B cell (primary cell): ENCODE measurements at regions of chr1 and their contacts with region 1.

Region 1: GRCh38 chr1:231603598-231604275 is 22.9 kb upstream of the DISC1 start:
- DNase-seq: peak; percentile 70
- ATAC-seq: peak; percentile 83
- H3K4me3 ChIP-seq: peak overlapping the region; percentile 37 to 94 (median 68)
- H3K4me3 Mint-ChIP-seq: peak overlapping the region; percentile 93
- H3K27ac ChIP-seq: peak overlapping the region in 1 of 2 donors; percentile 48
- H3K27ac Mint-ChIP-seq: peak overlapping the region; percentile 67
- H3K4me1 ChIP-seq: peaks cover 6 to 10% of the 10 kb centered on the region in 2 donors
- H3K4me1 Mint-ChIP-seq: peaks cover 14% of the 10 kb centered on the region
- H3K27me3 ChIP-seq: peaks cover 0 to 3% (median 0%) of the 10 kb centered on the region in 4 experiments
- H3K27me3 Mint-ChIP-seq: peaks cover 8% of the 10 kb centered on the region
- CTCF ChIP-seq: peak; percentile 85

Region 2: DNA sequence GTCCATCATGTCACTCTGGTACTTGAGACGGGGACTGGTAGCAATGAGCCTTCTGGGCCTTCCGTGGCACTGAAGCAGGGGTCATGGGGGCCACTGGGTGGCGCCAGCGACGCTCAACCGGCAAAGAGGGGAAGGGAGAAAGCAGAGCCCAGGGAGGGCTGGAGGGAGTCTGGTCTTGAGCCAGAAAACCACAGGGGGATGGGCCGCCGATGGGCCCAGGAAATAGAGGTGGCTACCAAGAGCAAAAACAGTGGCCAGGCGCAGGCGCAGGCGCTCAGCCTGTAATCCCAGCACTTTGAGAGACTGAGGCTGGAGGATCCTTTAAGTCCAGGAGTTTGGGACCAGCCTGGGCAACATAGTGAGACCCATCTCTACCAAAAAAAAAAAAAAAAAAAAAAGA is 287.9 kb before region 1 on chr1:
- CTCF ChIA-PET with region 1: interaction called, 8 read pairs
- POLR2A ChIA-PET with region 1: no interaction called
- intact Hi-C with region 1: loop called (anchors 1 kb)
- DNase-seq: peak; percentile 52
- ATAC-seq: peak; percentile 57
- H3K4me3 ChIP-seq: no peak overlapping the region
- H3K4me3 Mint-ChIP-seq: no peak overlapping the region
- H3K27ac ChIP-seq: no peak overlapping the region
- H3K27ac Mint-ChIP-seq: no peak overlapping the region
- H3K4me1 ChIP-seq: no peaks in the 10 kb centered on the region
- H3K4me1 Mint-ChIP-seq: no peaks in the 10 kb centered on the region
- H3K27me3 ChIP-seq: no peaks in the 10 kb centered on the region
- H3K27me3 Mint-ChIP-seq: no peaks in the 10 kb centered on the region
- CTCF ChIP-seq: peak; percentile 57

Region 3: DNA sequence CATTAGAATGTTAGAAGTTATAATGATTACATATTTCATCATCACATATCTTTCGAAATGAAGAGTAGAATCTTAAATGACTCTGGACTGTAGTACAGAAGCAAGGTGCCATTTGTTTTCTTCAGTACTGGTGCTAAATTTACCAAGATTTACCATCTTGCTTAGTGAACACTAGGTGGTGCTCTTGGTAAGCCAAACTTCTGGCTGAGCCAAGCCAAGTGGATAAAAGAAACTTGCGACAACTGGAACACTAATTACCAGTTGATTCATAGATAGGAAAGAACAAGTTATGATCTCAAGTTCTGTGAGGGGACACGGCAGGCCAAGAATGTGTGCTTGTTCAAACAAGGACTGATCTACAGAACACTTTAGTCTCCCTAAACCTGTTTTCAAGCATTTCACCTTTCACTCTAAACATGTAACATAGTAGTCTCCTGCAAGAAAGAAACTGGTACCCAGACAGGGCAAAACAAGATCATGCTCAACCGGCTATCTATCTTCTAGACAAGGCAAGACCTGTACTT is 245.8 kb before region 1 on chr1:
- CTCF ChIA-PET with region 1: interaction called, 45 read pairs
- POLR2A ChIA-PET with region 1: no interaction called
- intact Hi-C with region 1: loop called (anchors 1 kb)
- DNase-seq: peak; percentile 71
- ATAC-seq: peak; percentile 83
- H3K4me3 ChIP-seq: no peak overlapping the region
- H3K4me3 Mint-ChIP-seq: no peak overlapping the region
- H3K27ac ChIP-seq: no peak overlapping the region
- H3K27ac Mint-ChIP-seq: peak overlapping the region; percentile 32
- H3K4me1 ChIP-seq: peaks cover 0 to 3% of the 10 kb centered on the region in 2 donors
- H3K4me1 Mint-ChIP-seq: peaks cover 8% of the 10 kb centered on the region
- H3K27me3 ChIP-seq: no peaks in the 10 kb centered on the region
- H3K27me3 Mint-ChIP-seq: no peaks in the 10 kb centered on the region
- CTCF ChIP-seq: peak; percentile 88

Region 4: DNA sequence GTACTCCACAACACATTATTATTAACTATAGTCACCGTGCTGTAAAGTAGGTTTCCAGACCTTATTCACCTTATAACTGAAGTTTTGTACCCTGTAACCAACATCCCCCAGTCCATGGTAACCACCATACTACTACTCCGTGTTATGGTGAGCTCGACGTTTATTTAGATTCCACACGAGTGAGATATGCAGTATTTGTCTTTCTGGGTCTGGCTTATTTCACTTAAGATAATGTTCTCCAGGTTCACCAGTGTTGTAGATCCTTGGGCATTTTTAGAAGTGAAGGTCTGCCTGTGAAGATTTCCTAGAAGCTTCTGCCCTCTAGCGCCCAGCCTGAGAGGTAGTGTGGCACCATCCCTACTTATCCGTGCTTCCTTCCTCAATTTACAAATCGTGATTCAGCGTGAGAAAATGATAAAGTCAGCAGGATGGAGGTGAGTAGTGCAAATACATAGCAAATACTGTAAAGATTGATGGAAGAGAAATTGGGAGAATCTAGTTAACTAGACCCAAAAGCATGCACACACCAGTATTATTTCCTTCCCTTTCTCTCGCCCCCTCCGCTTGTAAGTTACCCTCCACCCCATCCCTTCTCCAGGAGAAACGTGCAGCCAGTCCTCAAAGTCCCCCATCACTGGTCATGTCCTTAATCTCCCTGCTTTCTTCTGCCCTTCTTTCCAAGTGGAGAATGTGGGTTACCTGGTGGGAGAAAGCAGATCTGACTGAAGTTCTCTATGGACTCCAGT is 13.1 kb before region 1 on chr1:
- CTCF ChIA-PET with region 1: interaction called, 18 read pairs
- POLR2A ChIA-PET with region 1: no interaction called
- intact Hi-C with region 1: no loop called
- DNase-seq: peak; percentile 59
- ATAC-seq: peak; percentile 28
- H3K4me3 ChIP-seq: no peak overlapping the region
- H3K4me3 Mint-ChIP-seq: no peak overlapping the region
- H3K27ac ChIP-seq: no peak overlapping the region
- H3K27ac Mint-ChIP-seq: no peak overlapping the region
- H3K4me1 ChIP-seq: peaks cover 10 to 12% of the 10 kb centered on the region in 2 donors
- H3K4me1 Mint-ChIP-seq: peaks cover 16% of the 10 kb centered on the region
- H3K27me3 ChIP-seq: no peaks in the 10 kb centered on the region
- H3K27me3 Mint-ChIP-seq: no peaks in the 10 kb centered on the region
- CTCF ChIP-seq: peak; percentile 57